Upper lobe of right lung (tissue), 1 donor: ENCODE measurements at regions of chr10 and their contacts with region 1.

Region 1: DNA sequence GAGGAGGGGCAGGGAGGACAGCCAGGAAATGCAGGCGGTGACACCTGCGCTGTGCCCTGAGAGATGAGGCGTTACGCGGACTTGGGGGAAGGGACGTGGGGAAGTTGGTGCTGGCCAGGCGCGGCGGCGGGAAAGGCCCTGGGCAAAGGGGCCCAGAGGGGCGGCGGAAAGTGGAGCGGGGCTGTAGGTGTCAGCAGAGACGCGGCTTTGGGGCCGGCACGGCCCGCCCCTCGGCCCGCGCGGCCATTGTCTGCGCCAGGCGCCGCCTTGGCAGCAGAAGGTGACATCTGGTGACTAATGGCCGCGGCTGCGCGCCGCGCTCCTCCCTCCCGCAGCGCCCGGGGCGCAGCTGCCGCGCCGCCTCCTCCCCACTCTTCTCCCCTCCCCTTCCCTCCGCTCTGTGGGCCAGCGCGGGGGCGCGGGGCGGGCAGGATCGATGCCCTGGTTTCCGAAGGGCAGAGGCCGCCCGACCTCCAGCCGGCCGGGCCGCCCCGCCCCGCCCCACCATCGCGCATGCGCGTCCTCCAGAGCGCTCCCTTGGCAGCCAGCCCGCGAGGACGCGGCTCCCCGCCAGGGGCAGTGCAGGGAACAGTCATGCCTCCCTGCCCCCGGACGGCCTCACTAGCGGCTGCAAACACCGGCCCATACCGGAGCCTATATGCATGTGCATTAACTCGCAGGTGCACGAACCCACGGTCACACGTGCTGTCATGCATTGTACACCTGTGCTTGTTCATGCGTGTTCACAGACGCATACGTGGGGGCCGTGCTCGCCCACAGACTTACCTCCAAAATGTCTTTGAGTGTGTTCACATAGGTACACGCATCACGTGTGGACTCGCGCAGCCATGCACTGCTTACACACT is 269.6 kb downstream of the RPS24 start:
- DNase-seq: peak; percentile 98
- ATAC-seq: peak; percentile 97
- H3K4me3 ChIP-seq: peak overlapping the region; percentile 60
- H3K27ac ChIP-seq: peak overlapping the region; percentile 83
- H3K4me1 ChIP-seq: peaks cover 12% of the 10 kb centered on the region
- H3K27me3 ChIP-seq: no peaks in the 10 kb centered on the region
- CTCF ChIP-seq: peak; percentile 71

Region 2: DNA sequence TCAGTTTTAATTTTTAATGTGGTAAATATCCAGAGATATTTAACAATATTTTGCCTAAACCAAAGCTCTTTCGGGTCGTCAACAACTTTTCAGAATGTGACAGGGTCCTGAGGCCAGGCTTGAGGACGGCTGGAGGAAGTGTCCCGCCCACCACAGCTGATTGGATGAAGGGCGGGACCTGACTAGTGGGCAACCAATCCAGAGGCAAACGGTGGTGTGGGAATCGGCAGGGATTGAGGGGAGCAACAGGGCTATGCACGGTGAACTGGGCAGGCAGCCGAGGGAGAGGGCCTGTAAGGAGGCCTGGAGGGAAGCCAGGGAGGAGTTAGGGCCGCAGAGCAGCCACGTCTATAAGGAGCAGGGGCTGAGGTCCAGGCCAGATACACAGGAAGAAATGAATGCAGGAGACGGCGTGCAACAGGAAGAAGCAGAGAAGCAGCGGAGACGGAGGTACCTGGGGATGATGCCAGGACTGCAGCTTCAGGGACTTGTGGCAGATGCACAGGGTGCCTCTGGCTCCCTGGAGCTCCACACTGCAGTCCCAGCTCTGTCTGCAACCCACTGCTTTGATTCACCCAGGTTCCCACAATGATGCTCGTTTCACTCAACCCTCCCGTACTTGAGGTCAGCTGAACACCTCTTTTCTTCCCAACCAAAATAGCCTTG is 719.5 kb after region 1 on chr10:
- intact Hi-C with region 1: loop called (anchors 5 kb)
- DNase-seq: peak; percentile 59
- ATAC-seq: peak; percentile 52
- H3K4me3 ChIP-seq: peak overlapping the region; percentile 21
- H3K27ac ChIP-seq: no peak overlapping the region
- H3K4me1 ChIP-seq: no peaks in the 10 kb centered on the region
- H3K27me3 ChIP-seq: no peaks in the 10 kb centered on the region
- CTCF ChIP-seq: no peak